CD14-positive monocyte (primary cell): ENCODE measurements at regions of chr17 and their contacts with region 1.

Region 1: GRCh38 chr17:31558748-31559644 is 167.5 kb downstream of the RAB11FIP4 start:
- DNase-seq: peak; percentile 67 to 87 (median 78)
- H3K4me3 ChIP-seq: peak overlapping the region; percentile 44 to 74 (median 62)
- H3K4me3 Mint-ChIP-seq: peak overlapping the region; percentile 66 to 80
- H3K27ac ChIP-seq: peak overlapping the region; percentile 56 to 78
- H3K27ac Mint-ChIP-seq: peak overlapping the region in 6 of 7 donors; percentile 48 to 80 (median 65)
- H3K4me1 ChIP-seq: peaks cover 38 to 46% of the 10 kb centered on the region in 2 donors
- H3K4me1 Mint-ChIP-seq: peaks cover 37% of the 10 kb centered on the region
- H3K27me3 ChIP-seq: no peaks in the 10 kb centered on the region
- H3K27me3 Mint-ChIP-seq: peaks cover 5 to 11% (median 6%) of the 10 kb centered on the region in 3 donors
- CTCF ChIP-seq: peak; percentile 88

Region 2: GRCh38 chr17:31678431-31678830 is 119.4 kb after region 1 on chr17:
- intact Hi-C with region 1: loop called in 1 of 2 experiments (anchors 5 kb)
- DNase-seq: peak; percentile 40 to 84 (median 53)
- H3K4me3 ChIP-seq: no peak overlapping the region
- H3K4me3 Mint-ChIP-seq: no peak overlapping the region
- H3K27ac ChIP-seq: no peak overlapping the region
- H3K27ac Mint-ChIP-seq: peak overlapping the region in 1 of 7 donors; percentile 81
- H3K4me1 ChIP-seq: peaks cover 10 to 11% of the 10 kb centered on the region in 2 donors
- H3K4me1 Mint-ChIP-seq: peaks cover 12% of the 10 kb centered on the region
- H3K27me3 ChIP-seq: peaks cover 0 to 2% of the 10 kb centered on the region in 2 donors
- H3K27me3 Mint-ChIP-seq: peaks cover 9 to 30% (median 11%) of the 10 kb centered on the region in 3 donors
- CTCF ChIP-seq: no peak